Activated B cell treated with CpG ODN at 0.5 μM for 24 hours (primary cell): ENCODE measurements at regions of chr14 and their contacts with region 1.

Region 1: GRCh38 chr14:68795597-68796417 is 2.9 kb upstream of the ZFP36L1 start:
- DNase-seq: peak; percentile 83
- ATAC-seq: peak; percentile 41
- H3K4me3 Mint-ChIP-seq: peak overlapping the region; percentile 100
- H3K27ac Mint-ChIP-seq: peak overlapping the region; percentile 99
- H3K4me1 Mint-ChIP-seq: peaks cover 48% of the 10 kb centered on the region
- H3K27me3 Mint-ChIP-seq: no peaks in the 10 kb centered on the region
- CTCF ChIP-seq: no peak

Region 2: GRCh38 chr14:67994531-67994930 is 801.3 kb before region 1 on chr14:
- CTCF ChIA-PET with region 1: no interaction called
- POLR2A ChIA-PET with region 1: interaction called, 28 read pairs
- intact Hi-C with region 1: no loop called
- DNase-seq: no peak
- ATAC-seq: no peak
- H3K4me3 Mint-ChIP-seq: no peak overlapping the region
- H3K27ac Mint-ChIP-seq: no peak overlapping the region
- H3K4me1 Mint-ChIP-seq: no peaks in the 10 kb centered on the region
- H3K27me3 Mint-ChIP-seq: no peaks in the 10 kb centered on the region
- CTCF ChIP-seq: no peak

Region 3: DNA sequence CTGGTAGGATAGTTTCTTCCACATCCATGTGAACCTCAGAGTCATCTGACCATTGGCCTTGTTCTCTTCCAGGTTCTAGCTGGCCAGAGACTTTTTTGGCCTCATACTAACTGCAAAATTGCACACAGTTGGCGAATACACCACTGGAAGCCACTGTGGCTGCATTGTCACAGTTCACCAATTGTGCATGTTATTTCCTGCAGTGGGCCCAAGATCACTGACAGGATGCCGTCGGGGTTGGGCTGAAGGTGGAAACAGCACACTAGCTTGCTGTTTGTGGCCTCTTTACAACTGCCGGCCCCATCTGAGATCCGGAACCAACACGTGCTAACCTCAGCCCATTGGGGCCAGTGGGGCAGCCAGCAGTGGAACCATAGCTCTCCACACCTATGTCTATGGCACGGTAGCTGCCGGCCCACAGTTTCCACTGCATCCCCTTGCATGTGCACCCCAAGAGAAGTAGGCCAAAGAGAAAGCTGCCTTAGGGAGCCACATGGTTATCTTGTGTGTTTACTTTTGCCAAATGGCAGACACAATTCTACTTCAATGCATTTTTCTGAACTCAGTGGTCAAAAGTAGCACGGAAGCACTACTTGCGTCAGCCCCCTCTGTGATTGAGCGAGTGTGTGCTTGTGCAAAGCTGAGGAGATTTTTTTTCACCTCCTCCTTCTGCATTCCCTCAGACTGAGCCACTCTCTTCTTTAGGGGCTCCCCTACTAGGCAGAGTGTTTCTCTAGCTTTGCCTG is 512.3 kb before region 1 on chr14:
- CTCF ChIA-PET with region 1: interaction called, 3 read pairs
- POLR2A ChIA-PET with region 1: interaction called, 361 read pairs
- intact Hi-C with region 1: loop called (anchors 1 kb)
- DNase-seq: peak; percentile 61
- ATAC-seq: peak; percentile 60
- H3K4me3 Mint-ChIP-seq: peak overlapping the region; percentile 58
- H3K27ac Mint-ChIP-seq: peak overlapping the region; percentile 99
- H3K4me1 Mint-ChIP-seq: peaks cover 97% of the 10 kb centered on the region
- H3K27me3 Mint-ChIP-seq: no peaks in the 10 kb centered on the region
- CTCF ChIP-seq: no peak

Region 4: DNA sequence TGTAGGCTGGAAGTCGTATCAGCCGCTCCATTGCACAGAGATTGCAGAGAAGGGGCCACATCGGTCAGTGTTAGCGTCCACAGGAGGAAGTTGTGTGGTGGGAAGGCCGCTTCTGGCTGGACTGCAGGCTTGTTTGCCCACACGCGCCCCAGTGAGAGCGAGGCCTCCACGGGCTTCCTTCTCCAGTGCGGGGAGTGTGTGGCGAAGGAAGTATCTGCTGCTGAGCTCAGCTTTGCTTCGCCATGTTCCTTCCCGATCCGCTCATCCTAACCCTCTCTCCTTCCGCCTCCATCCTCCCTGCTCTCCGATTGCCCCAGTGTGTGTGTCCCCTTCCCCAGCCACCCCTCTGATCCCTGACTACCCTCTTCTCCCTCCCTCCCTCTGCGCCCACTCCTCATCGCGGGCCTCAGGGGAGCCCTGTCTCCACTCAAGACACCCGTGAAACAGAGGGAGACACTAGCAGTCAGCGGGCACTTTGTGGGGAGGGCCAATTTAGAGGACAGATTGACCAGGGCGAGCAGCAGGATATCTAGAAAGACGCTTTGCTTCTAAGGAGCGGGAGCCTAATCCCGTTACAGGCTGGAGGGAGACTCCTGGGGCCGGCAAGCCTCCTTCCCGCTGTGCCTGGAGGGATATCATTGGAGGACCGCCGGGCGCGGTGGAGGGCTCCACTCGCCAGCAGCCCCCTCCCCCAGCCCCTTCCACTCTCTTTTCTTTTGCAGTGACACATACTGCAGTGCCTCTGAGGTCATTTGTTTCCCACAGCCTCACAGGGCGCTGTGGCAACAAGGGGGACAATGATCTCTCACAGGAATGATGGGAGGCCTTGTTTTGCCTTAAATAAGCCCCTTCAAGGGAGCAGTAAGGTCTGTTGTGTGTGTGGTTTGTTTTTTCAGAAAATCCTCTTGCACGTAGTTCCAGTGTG is 431.7 kb before region 1 on chr14:
- CTCF ChIA-PET with region 1: no interaction called
- POLR2A ChIA-PET with region 1: interaction called, 14 read pairs
- intact Hi-C with region 1: no loop called
- DNase-seq: no peak
- ATAC-seq: no peak
- H3K4me3 Mint-ChIP-seq: no peak overlapping the region
- H3K27ac Mint-ChIP-seq: peak overlapping the region; percentile 91
- H3K4me1 Mint-ChIP-seq: peaks cover 92% of the 10 kb centered on the region
- H3K27me3 Mint-ChIP-seq: no peaks in the 10 kb centered on the region
- CTCF ChIP-seq: no peak

Region 5: GRCh38 chr14:68482772-68483395 is 312.9 kb before region 1 on chr14:
- CTCF ChIA-PET with region 1: no interaction called
- POLR2A ChIA-PET with region 1: interaction called, 63 read pairs
- intact Hi-C with region 1: no loop called
- DNase-seq: no peak
- ATAC-seq: no peak
- H3K4me3 Mint-ChIP-seq: no peak overlapping the region
- H3K27ac Mint-ChIP-seq: peak overlapping the region; percentile 30
- H3K4me1 Mint-ChIP-seq: peaks cover 52% of the 10 kb centered on the region
- H3K27me3 Mint-ChIP-seq: no peaks in the 10 kb centered on the region
- CTCF ChIP-seq: no peak

Region 6: GRCh38 chr14:68543516-68543915 is 252.3 kb before region 1 on chr14:
- CTCF ChIA-PET with region 1: no interaction called
- POLR2A ChIA-PET with region 1: interaction called, 13 read pairs
- intact Hi-C with region 1: no loop called
- DNase-seq: no peak
- ATAC-seq: no peak
- H3K4me3 Mint-ChIP-seq: no peak overlapping the region
- H3K27ac Mint-ChIP-seq: no peak overlapping the region
- H3K4me1 Mint-ChIP-seq: peaks cover 18% of the 10 kb centered on the region
- H3K27me3 Mint-ChIP-seq: no peaks in the 10 kb centered on the region
- CTCF ChIP-seq: no peak

Region 7: DNA sequence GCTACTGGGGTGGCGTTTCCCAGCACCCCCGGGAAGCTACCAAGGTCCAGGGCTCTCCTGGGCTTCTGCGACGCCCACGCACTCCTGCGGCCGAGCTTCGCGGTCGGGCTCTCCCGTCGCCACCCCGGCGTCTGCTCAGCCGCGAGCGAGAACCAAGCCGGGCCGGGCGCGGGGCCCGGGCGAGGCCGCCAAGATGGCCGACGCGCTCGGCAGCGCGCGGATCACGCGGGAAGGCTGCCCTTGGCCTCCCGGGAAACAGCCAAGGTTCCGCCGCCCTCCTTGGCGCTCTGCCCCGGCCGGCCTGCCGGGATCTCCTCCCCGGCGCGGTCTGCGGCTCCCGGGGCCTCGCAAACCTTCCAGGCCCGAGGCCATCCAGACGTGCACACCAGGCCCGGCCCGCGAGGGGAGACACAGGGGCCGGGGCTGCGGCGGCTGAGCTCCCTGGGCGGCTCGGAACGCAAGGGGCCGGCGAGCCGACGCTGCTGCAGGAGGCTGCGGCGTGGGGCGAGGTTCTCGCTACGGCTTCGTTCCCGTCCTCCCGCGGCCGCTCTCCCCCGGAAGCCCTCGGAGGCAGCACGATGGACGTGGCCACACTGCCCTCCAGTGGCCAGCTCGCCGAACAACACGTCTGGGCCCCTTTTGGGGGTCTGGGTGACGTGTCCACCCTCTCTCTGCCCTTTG is 20.6 kb after region 1 on chr14:
- CTCF ChIA-PET with region 1: interaction called, 121 read pairs
- POLR2A ChIA-PET with region 1: interaction called, 2,953 read pairs
- intact Hi-C with region 1: loop called (anchors 1 kb)
- DNase-seq: peak; percentile 96
- ATAC-seq: peak; percentile 74
- H3K4me3 Mint-ChIP-seq: peak overlapping the region; percentile 89
- H3K27ac Mint-ChIP-seq: peak overlapping the region; percentile 93
- H3K4me1 Mint-ChIP-seq: peaks cover 86% of the 10 kb centered on the region
- H3K27me3 Mint-ChIP-seq: no peaks in the 10 kb centered on the region
- CTCF ChIP-seq: peak; percentile 54

Region 8: DNA sequence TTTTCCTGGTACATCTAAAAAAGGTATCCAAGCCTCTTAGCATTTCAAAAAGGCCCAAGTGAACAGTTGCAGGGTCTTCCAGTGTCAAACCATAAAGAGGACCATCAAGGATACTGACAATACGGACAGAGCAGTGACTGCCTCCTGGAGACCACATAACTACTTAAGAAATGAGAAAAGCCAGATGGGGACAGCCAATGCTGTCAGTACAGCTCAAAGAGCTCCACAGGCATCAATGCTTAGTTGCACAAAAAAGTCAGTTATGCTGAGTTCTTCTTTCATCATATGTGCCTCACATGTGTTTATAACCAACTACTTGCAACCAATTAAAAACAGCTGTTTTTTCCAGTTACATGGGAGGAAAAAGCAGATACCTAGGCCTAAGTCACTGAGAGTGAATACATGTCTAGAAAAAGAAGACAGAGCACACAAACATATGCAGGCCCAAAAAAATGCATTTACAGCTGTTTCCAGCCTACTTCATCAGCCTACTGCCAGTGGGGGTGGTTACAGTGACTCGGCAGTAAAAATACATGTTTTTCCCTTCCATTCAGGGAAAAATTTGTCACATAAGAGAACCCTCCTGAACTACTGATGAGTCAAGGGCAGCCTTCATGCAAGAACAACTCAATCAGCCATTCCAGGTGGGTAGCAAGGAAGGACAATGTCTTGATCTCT is 273.1 kb after region 1 on chr14:
- CTCF ChIA-PET with region 1: no interaction called
- POLR2A ChIA-PET with region 1: no interaction called
- intact Hi-C with region 1: no loop called
- DNase-seq: no peak
- ATAC-seq: no peak
- H3K4me3 Mint-ChIP-seq: no peak overlapping the region
- H3K27ac Mint-ChIP-seq: no peak overlapping the region
- H3K4me1 Mint-ChIP-seq: no peaks in the 10 kb centered on the region
- H3K27me3 Mint-ChIP-seq: no peaks in the 10 kb centered on the region
- CTCF ChIP-seq: no peak